Posterior cingulate gyrus (tissue), 11 donors: ENCODE measurements at regions of chr1 and their contacts with region 1.

Region 1: GRCh38 chr1:45303582-45304310 is 22.9 kb upstream of the HPDL start:
- DNase-seq: peak; percentile 95 to 99 (median 98)

Region 2: DNA sequence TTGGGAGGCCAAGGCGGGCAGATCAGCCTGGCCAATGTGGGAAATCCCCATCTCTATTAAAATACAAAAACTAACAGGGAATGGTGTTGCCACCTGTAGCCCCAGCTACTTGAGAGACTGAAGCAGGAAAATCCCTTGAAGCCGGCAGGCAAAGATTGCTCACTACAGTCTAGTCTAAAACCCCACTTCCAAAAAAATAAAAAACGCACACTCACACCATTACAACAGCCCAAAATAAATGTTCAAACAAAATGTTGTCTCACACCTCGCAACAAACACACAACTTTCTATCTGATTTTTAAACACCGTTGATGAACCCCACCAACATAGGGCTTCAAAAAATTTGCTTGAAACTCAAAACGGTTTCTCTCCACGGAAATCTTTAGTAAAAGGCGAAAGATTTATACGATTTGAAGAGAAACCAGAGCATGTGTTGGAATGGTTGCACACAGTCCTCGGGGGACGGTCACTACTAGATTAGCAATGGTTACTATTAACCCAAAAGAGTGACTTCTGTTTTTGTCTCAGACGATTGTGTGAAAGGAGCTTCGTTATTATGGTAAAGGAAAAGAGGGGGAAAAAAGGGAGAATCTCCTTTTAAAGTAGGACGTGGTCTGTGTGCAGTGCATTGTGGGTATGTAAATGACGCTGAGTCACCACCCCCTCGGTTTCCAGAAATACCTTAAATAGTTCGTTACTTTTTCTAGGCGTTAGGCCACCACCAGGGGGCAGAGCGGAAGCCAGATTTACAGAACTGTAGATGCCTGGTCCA is 572.8 kb before region 1 on chr1 and contains the start of gene RNU5D-1:
- intact Hi-C with region 1: loop called (anchors 10 kb)
- DNase-seq: peak; percentile 84 to 98 (median 94)

Region 3: GRCh38 chr1:44835738-44836675 is 467.7 kb before region 1 on chr1:
- intact Hi-C with region 1: loop called (anchors 10 kb)
- DNase-seq: peak; percentile 64 to 97 (median 86)

Region 4: DNA sequence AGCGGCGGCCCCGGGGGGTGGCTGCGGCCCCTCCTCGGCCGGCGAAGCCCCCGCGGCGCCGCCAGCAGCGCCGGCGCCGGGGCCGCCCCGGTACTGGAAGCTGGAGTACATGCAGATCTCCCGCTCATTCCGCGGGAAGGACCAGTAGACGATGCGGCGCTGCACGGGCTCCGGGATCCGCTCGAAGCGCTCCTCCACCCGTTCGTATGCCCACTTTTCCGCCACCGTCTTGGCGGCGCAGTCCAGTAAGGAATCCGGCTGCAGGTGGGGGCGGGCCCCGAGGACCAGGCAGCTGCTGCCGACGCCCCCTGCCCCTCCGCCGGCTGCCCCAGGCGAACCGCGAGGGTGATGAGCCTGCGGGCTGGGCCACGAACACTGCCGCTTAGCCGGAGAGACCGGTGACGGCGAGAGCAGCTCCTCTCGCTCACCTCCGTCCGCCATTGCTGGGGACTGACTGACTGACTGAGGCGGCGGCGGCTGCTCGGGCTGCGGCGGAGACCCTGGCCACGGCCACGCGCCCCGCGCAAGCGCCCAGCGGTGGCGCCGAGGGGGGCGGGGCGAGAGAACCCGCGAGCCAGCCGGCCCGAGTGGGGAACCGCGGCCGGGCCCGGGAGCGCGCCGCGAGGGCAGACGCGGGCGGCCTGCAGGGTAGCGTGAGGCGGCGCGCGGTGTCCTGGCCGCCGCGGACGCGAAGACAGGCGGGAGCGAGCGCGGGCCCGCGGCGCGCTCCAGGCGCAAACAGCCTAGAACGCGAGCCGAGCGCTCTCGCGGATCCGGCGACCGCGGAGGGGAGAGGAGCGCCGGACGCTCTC is 97.6 kb before region 1 on chr1 and contains the start of gene ZSWIM5:
- intact Hi-C with region 1: loop called (anchors 2 kb)
- DNase-seq: peak; percentile 60 to 96 (median 72)

Region 5: GRCh38 chr1:45339789-45340570 is 36.2 kb after region 1 on chr1 and contains the starts of genes MUTYH and TOE1:
- intact Hi-C with region 1: loop called (anchors 1 kb)
- DNase-seq: peak; percentile 80 to 98 (median 89)